GM10248 (cell line): ENCODE measurements at regions of chr15 and their contacts with region 1.

Region 1: DNA sequence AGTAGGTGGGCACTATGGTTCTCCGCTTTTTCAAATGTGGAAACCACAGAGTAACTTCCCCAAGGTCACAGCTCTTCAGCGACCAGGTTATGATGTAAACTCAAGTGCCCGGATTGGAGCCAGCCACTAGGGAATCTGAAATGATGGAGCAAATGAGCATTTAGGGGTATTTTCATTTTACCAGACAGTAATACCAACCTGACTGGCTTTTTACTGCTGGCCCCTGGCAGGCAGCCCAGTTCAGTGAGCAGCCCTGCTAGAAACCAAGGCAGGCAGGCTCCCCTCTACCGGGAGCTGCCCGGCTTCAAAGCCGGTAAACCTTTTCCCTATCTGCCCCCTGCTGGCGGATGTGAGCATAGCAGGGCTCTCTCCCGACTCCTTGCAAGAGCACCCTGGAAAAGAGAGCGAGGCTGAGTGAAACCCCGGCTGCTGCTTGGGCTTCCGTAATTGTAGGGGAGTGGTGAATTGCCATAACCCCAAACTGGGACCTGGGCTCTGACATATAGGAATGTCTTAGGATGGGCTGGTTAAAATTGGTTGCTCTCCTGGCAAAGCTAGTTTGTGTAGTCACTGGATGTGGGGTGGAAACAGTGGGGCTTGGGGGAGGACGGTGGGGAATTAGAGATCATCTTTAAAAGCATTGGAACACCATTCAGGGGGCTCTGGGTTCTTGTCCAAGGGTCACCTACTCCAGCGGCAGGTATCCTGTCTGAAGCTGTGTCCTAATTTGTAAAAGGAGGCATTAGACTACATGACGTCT is 98.0 kb upstream of the TNFAIP8L3 start:
- DNase-seq: peak; percentile 76
- CTCF ChIP-seq: peak; percentile 89

Region 2: DNA sequence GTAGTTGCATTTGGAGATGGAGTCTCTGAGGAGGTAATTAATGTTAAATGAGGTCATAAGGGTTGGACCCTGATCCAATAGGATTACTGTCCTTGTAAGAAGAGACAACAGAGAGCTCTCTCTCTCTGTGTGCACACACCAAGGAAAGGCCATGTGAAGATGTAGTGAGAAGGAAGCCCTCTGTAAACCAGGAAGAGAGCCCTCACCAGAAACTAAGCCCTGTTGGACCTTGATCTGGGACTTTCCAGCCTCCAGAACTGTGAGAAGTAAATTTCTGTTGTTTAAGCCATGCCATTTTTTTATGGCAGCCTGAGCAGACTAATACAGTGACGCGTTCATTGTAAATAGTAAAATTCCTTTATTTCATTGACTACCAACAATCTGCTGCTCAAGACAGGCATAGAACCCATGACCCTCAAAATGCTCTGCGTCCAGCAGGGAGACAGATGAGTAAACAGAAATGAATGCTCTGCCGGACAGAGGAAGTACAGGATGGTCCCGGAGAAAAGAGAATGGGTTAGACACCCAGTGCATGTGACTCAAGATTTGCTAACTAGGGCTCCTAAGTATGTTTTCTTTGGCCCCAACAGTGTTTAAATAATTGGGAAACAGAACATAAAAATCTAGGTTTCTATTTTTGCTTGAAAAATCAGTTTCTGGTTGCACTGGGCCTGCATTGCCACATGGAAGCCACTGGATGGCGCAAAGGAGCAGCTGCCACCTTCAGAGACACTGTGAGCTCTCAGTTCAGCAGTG is 60.1 kb before region 1 on chr15:
- CTCF ChIA-PET with region 1: interaction called, 19 read pairs
- POLR2A ChIA-PET with region 1: no interaction called
- DNase-seq: no peak
- CTCF ChIP-seq: peak; percentile 71

Region 3: GRCh38 chr15:51172193-51172592 is 20.5 kb before region 1 on chr15:
- CTCF ChIA-PET with region 1: interaction called, 12 read pairs
- POLR2A ChIA-PET with region 1: no interaction called
- DNase-seq: no peak
- CTCF ChIP-seq: no peak

Region 4: GRCh38 chr15:51218299-51218938 is 25.7 kb after region 1 on chr15:
- CTCF ChIA-PET with region 1: interaction called, 13 read pairs
- POLR2A ChIA-PET with region 1: no interaction called
- DNase-seq: no peak
- CTCF ChIP-seq: no peak

Region 5: GRCh38 chr15:51299187-51300066 is 106.7 kb after region 1 on chr15:
- CTCF ChIA-PET with region 1: no interaction called
- POLR2A ChIA-PET with region 1: no interaction called
- DNase-seq: no peak
- CTCF ChIP-seq: no peak

Region 6: DNA sequence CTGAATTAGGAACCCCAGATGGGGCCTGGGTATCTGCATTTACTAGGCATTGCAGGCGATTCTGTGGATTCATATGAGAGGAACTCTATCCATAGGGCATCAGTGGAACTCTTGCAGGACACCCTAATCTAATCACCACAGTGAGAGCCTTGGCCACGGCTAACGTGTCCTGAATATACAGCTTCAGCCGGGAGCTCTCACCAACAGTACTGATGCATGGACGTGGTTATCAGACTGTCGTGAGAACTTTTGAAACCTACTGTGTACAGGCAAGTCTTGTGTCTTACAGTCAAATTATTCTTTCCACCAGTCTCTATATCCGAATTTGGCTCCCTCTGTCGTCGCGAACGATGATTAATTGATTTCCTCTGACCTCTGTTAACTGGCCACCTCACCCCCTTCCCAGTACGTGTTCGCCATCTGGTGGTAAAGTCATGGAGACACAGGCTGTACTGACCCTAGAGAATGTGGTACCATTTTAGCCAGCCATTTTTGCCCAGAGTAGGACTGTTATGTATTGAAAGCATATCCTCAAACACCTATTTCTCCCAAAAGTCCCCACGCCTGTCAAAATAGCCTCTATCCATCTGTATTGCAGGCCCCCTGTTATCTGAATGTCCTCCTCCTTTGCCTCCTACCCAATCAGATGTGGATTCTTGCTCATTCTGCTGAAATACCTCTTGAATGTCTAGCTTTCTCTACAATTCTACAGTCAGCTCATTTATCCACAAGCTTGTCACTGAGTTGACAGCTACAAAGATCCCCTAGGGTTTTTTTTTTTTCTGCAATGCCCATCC is 188.5 kb after region 1 on chr15:
- CTCF ChIA-PET with region 1: interaction called, 14 read pairs
- POLR2A ChIA-PET with region 1: no interaction called
- DNase-seq: peak; percentile 77
- CTCF ChIP-seq: peak; percentile 89